Activated CD8-positive, alpha-beta memory T cell treated with anti-CD3 and anti-CD28 coated beads, Interleukin-2, amount 10 ng/mL, durations not matched to agents 7 days and 5 days (primary cell): ENCODE measurements at regions of chr3 and their contacts with region 1.

Region 1: DNA sequence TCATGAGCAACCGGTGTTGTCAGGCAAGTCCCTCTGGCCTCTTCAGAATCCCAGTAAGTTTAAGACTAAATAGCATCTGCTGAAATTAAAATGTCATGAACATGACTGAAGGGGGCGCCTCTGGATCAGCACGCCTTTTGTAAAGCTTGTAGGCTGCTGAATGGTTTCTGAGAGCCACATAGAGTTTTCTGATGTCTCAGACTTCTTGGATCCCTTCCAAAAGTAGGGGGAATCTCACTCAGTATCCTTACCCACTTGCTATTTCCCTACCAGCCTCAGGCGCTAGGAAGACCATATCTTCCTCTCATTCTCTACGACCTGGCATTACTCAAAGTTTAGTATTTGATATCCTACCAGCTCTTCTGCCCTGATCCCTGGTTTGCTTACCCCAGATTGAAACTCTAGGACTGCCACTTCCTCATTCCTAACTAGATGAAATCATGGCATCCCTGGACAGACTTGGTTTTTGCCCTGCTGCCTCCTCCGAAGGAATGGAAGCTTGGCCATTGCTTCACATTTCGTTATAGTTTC is 62.7 kb upstream of the CD47 start:
- DNase-seq: peak; percentile 73
- ATAC-seq: peak; percentile 76
- H3K4me3 Mint-ChIP-seq: no peak overlapping the region
- H3K27ac Mint-ChIP-seq: no peak overlapping the region
- H3K4me1 Mint-ChIP-seq: peaks cover 2% of the 10 kb centered on the region
- H3K27me3 Mint-ChIP-seq: no peaks in the 10 kb centered on the region

Region 2: DNA sequence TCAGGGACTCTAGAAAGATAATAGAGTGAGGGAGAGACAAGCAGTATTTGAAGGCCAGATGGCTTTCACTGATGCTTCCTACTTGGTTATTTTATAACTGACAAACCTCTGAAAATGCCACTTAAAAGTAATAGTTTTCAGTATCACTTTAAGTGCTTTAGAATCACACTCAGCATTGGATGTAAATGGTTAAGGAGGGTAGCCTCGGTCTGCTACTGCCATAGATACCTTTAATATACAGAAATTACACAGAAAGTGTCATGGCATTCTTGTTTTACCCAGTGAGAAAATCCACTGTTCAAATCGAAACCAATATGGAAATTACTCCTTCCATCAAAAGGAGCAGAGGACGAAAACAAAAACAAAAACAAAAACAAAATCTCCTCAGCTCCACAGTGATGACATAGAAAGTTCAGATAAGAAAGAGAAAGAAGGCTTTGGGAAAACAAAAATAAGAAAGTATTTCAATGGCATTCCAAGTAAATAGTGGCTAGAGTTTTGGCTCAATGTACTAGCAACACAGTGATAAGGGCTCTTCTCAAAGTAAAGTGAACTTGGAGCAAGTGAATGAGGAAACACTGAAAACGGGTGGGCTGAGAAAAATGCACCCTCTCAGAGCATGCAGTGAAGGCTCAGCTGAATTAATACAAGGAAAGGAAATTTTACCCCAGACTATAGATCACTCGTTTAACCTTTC is 19.5 kb before region 1 on chr3:
- CTCF ChIA-PET with region 1: interaction called, 11 read pairs
- DNase-seq: no peak
- ATAC-seq: peak; percentile 51
- H3K4me3 Mint-ChIP-seq: peak overlapping the region; percentile 72
- H3K27ac Mint-ChIP-seq: peak overlapping the region; percentile 82
- H3K4me1 Mint-ChIP-seq: peaks cover 67% of the 10 kb centered on the region
- H3K27me3 Mint-ChIP-seq: no peaks in the 10 kb centered on the region

Region 3: GRCh38 chr3:108406661-108407206 is 253.2 kb after region 1 on chr3:
- CTCF ChIA-PET with region 1: interaction called, 35 read pairs
- DNase-seq: peak; percentile 50
- ATAC-seq: peak; percentile 96
- H3K4me3 Mint-ChIP-seq: no peak overlapping the region
- H3K27ac Mint-ChIP-seq: no peak overlapping the region
- H3K4me1 Mint-ChIP-seq: peaks cover 10% of the 10 kb centered on the region
- H3K27me3 Mint-ChIP-seq: no peaks in the 10 kb centered on the region

Region 4: DNA sequence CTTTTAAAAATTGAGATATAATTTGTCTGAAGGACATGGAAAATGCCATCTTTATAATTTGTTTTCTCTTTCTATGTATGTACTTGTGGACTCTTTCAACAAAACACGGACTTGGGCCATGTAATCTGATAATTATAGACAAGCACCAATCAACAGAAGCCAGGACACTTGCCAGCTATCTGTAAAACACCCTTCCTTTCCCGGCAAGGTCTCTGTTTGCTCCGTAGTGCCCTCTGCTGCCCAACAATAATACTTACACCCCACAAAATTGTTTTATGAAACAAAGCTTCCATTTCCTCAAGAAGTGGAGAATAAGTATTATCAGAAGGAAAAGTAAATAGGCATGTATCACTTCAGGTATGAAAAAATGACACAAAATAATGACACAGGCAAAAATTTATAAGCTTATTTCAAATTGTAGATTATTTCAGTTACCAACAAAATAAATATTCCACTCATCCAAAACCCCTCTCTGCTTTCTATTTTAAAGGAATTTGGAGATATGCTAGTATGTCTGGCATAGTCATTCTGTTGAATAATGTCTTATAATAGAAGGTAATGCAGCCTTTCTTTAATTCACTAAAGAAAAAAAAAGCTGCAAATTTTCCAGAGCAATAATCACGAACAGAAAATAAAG is 324.1 kb after region 1 on chr3:
- CTCF ChIA-PET with region 1: interaction called, 26 read pairs
- DNase-seq: peak; percentile 72
- ATAC-seq: peak; percentile 71
- H3K4me3 Mint-ChIP-seq: no peak overlapping the region
- H3K27ac Mint-ChIP-seq: no peak overlapping the region
- H3K4me1 Mint-ChIP-seq: peaks cover 6% of the 10 kb centered on the region
- H3K27me3 Mint-ChIP-seq: peaks cover 20% of the 10 kb centered on the region